ENCODE measurements at regions of chr15 and their contacts with region 1.

Region 1: GRCh38 chr15:39580117-39580484 is 778 bp upstream of the THBS1 start:
- DNase-seq: peak; percentile 95 to 98
- ATAC-seq: peak; percentile 92
- H3K4me3 ChIP-seq: peak overlapping the region; percentile 29 to 35
- H3K27ac ChIP-seq: no peak overlapping the region
- H3K4me1 ChIP-seq: no peaks in the 10 kb centered on the region
- H3K27me3 ChIP-seq: no peaks in the 10 kb centered on the region

Region 2: GRCh38 chr15:38817427-38818156 is 762.5 kb before region 1 on chr15:
- intact Hi-C with region 1: loop called (anchors 5 to 10 kb)
- DNase-seq: peak; percentile 76 to 93
- ATAC-seq: peak; percentile 91
- H3K4me3 ChIP-seq: no peak overlapping the region
- H3K27ac ChIP-seq: no peak overlapping the region
- H3K4me1 ChIP-seq: no peaks in the 10 kb centered on the region
- H3K27me3 ChIP-seq: no peaks in the 10 kb centered on the region

Region 3: GRCh38 chr15:39125904-39126303 is 454.2 kb before region 1 on chr15:
- intact Hi-C with region 1: loop called in 1 of 2 experiments (anchors 10 kb)
- DNase-seq: no peak
- ATAC-seq: no peak
- H3K4me3 ChIP-seq: no peak overlapping the region
- H3K27ac ChIP-seq: no peak overlapping the region
- H3K4me1 ChIP-seq: peaks cover 0 to 4% of the 10 kb centered on the region in 2 donors
- H3K27me3 ChIP-seq: no peaks in the 10 kb centered on the region

Region 4: GRCh38 chr15:39171944-39172368 is 408.1 kb before region 1 on chr15:
- intact Hi-C with region 1: loop called (anchors 5 kb)
- DNase-seq: peak in 1 of 2 donors; percentile 79
- ATAC-seq: peak; percentile 65
- H3K4me3 ChIP-seq: no peak overlapping the region
- H3K27ac ChIP-seq: no peak overlapping the region
- H3K4me1 ChIP-seq: no peaks in the 10 kb centered on the region
- H3K27me3 ChIP-seq: no peaks in the 10 kb centered on the region

Region 5: DNA sequence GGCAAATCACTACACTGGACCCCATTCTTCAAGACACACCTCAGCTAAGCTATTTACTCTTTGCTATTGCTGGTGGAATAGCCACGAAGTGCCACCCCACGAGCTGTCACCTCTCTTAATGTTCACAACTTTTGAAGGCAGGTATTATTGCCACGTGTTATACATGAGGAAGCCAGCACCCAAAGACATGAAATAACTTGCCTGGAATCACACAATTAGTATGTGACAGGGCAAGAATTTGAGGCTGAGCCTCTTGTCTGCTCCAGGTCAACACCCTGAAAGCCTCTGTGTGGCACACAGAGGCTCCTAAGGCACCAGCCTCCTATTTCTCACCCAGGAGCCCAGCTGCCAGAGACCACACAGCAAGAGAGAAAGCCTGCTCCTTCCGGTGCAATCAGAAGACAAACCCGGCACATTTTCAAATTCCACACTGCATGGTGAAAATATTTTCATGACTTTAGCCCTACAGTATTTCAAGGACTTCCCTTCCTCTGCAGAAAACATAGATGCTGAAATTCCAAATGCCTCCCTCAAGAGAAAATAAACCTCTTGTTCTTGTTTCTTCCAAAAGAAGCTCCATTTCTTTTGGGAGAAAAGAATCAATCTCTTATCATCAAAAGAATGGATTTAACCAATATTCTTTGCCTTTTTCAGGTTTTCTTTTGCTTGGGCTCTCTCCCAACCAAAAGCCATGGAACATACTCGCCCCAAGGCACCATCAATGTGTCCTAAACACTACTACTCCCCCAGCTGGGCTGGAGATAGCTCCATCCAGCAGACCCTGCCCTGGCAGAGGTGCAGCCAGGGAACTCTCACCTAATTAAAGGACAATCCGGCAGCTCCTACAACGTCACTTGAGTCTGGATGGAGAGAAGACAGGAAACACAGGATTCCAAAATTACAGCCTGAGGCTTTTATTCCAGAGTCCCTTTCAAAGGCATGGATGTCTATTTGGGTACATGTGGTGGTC is 83.9 kb before region 1 on chr15:
- intact Hi-C with region 1: loop called in 1 of 2 experiments (anchors 5 kb)
- DNase-seq: no peak
- ATAC-seq: no peak
- H3K4me3 ChIP-seq: no peak overlapping the region
- H3K27ac ChIP-seq: no peak overlapping the region
- H3K4me1 ChIP-seq: peaks cover 0 to 3% of the 10 kb centered on the region in 2 donors
- H3K27me3 ChIP-seq: no peaks in the 10 kb centered on the region

Region 6: GRCh38 chr15:39526206-39526605 is 53.9 kb before region 1 on chr15:
- intact Hi-C with region 1: no loop called
- DNase-seq: no peak
- ATAC-seq: no peak
- H3K4me3 ChIP-seq: no peak overlapping the region
- H3K27ac ChIP-seq: no peak overlapping the region
- H3K4me1 ChIP-seq: no peaks in the 10 kb centered on the region
- H3K27me3 ChIP-seq: no peaks in the 10 kb centered on the region

Region 7: DNA sequence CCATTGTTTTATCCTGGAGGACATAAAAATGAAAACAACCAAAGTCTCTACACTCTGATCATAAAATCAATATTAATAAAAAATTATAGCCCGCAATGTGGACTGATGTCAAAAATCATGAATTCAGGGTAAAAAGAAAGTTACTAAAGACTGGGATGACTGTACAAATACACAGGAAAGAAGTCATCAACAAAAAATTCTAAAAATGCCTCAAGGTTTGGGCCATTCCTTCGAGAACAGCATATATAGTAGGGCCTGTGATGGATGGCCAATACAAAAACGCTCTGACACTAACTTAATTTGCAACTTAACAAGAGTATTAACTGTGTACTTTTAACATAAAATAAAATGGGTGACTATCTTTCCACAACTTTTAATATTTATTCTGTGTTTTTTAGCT is 77.6 kb after region 1 on chr15:
- intact Hi-C with region 1: no loop called
- DNase-seq: no peak
- ATAC-seq: no peak
- H3K4me3 ChIP-seq: no peak overlapping the region
- H3K27ac ChIP-seq: no peak overlapping the region
- H3K4me1 ChIP-seq: no peaks in the 10 kb centered on the region
- H3K27me3 ChIP-seq: no peaks in the 10 kb centered on the region

Region 8: DNA sequence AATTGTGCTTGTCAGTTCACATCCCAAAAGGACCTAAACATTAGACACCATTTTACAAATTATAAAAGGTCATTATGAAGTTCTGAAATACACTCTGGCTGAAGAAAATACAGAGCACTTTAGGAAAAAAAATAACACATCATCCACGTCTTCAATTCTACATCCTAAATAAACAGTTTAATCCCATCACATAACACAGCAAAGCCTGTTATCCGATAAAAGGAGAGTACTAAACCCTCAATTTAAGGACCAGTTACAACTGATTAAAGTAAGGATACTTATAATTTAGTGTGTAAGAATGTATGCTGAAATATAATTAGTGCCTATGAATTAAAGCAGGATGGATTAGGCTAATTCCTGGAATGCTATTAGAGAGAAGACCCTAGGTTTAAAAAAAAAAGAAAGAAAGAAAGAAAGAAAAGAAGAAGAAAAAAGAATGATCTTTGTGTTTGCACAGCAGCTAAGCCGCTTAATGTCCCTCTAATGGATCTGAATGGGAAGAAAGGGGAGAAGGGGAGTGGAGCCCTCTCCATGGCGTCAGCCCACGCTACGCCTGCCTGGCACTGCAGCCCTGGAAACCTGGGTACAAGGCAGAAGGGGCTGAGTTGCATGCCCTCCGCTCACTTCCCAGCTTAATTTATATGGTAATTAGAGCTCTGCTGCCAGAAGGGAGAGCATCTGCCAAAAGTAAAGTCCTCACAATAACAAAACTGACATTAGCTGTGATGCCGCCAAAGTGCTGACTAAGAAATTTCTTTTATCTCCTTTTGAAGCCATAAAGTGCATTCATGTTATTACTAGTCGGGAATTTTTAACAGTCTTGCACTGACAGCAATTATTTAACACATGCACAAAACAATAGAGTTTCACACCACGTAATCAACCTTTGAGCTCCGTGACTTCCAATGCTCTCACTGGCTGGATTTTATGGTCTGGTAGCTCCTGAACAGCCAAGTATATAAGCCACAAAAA is 112.5 kb after region 1 on chr15:
- intact Hi-C with region 1: no loop called
- DNase-seq: no peak
- ATAC-seq: no peak
- H3K4me3 ChIP-seq: no peak overlapping the region
- H3K27ac ChIP-seq: no peak overlapping the region
- H3K4me1 ChIP-seq: peaks cover 0 to 3% of the 10 kb centered on the region in 2 donors
- H3K27me3 ChIP-seq: no peaks in the 10 kb centered on the region